Aorta (tissue), 5 donors: ENCODE measurements at regions of chr12 and their contacts with region 1.

Region 1: GRCh38 chr12:27733052-27733656 is 22.5 kb downstream of the MRPS35 start:
- DNase-seq: no peak
- ATAC-seq: no peak
- H3K4me3 ChIP-seq: no peak overlapping the region
- H3K27ac ChIP-seq: no peak overlapping the region
- H3K4me1 ChIP-seq: no peaks in the 10 kb centered on the region
- H3K27me3 ChIP-seq: no peaks in the 10 kb centered on the region

Region 2: GRCh38 chr12:27940756-27941402 is 207.7 kb after region 1 on chr12:
- intact Hi-C with region 1: loop called (anchors 2 kb)
- DNase-seq: peak; percentile 75 to 90
- ATAC-seq: peak; percentile 79
- H3K4me3 ChIP-seq: no peak overlapping the region
- H3K27ac ChIP-seq: no peak overlapping the region
- H3K4me1 ChIP-seq: peaks cover 0 to 3% of the 10 kb centered on the region in 2 donors
- H3K27me3 ChIP-seq: no peaks in the 10 kb centered on the region